ENCODE measurements at regions of chrX and their contacts with region 1.

Region 1: DNA sequence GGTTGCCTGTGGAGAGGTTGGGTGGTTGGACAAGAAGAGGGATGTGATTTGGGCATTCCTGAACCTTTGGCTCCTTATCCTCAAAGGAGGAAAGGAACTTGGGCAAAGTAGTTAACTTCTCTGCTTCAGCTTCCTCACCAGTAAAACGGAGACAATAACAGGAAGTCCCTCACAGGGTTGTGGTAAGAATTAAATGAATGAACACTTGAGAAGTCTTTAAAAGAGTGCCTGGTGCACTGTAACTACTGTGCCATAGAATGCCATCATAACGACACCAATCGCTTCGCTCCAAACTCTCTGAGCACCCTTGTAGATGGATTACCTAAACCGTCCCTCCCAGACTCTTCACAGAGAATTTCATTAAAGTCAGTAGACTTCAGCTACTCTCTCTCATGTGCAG is 10.5 kb downstream of the ZCCHC18 start:
- DNase-seq: peak; percentile 38
- ATAC-seq: peak; percentile 68
- H3K4me3 ChIP-seq: no peak overlapping the region
- H3K4me3 Mint-ChIP-seq: peak overlapping the region; percentile 74
- H3K27ac ChIP-seq: peak overlapping the region; percentile 57 to 78
- H3K27ac Mint-ChIP-seq: peak overlapping the region; percentile 97
- H3K4me1 ChIP-seq: peaks cover 39 to 60% of the 10 kb centered on the region in 2 donors
- H3K4me1 Mint-ChIP-seq: peaks cover 57% of the 10 kb centered on the region
- H3K27me3 ChIP-seq: no peaks in the 10 kb centered on the region
- H3K27me3 Mint-ChIP-seq: no peaks in the 10 kb centered on the region
- CTCF ChIP-seq: no peak

Region 2: GRCh38 chrX:104165894-104166737 is 43.3 kb after region 1 on chrX and contains the start of gene FAM199X:
- CTCF ChIA-PET with region 1: interaction called, 3 read pairs
- POLR2A ChIA-PET with region 1: no interaction called
- intact Hi-C with region 1: loop called (anchors 2 kb)
- DNase-seq: peak; percentile 88
- ATAC-seq: peak; percentile 98
- H3K4me3 ChIP-seq: peak within 1 kb of the TSS; percentile 36 to 80 (median 71)
- H3K4me3 Mint-ChIP-seq: peak within 1 kb of the TSS; percentile 88
- H3K27ac ChIP-seq: peak within 1 kb of the TSS; percentile 62 to 77
- H3K27ac Mint-ChIP-seq: peak within 1 kb of the TSS; percentile 93
- H3K4me1 ChIP-seq: peaks cover 14 to 18% of the 10 kb centered on the region in 2 donors
- H3K4me1 Mint-ChIP-seq: peaks cover 36% of the 10 kb centered on the region
- H3K27me3 ChIP-seq: no peaks in the 10 kb centered on the region
- H3K27me3 Mint-ChIP-seq: no peaks in the 10 kb centered on the region
- CTCF ChIP-seq: peak; percentile 73
- total RNA-seq, gene FAM199X: 19.2 and 20.2 TPM in 2 replicates